Activated B cell treated with CpG ODN at 0.5 μM for 24 hours (primary cell): ENCODE measurements at regions of chr10 and their contacts with region 1.

Region 1: GRCh38 chr10:119305860-119306513 is 98.6 kb downstream of the GRK5 start:
- DNase-seq: peak; percentile 77
- ATAC-seq: peak; percentile 72
- H3K4me3 Mint-ChIP-seq: peak overlapping the region; percentile 86
- H3K27ac Mint-ChIP-seq: peak overlapping the region; percentile 100
- H3K4me1 Mint-ChIP-seq: peaks cover 98% of the 10 kb centered on the region
- H3K27me3 Mint-ChIP-seq: no peaks in the 10 kb centered on the region
- CTCF ChIP-seq: no peak

Region 2: GRCh38 chr10:117710181-117710798 is 1595.7 kb before region 1 on chr10:
- CTCF ChIA-PET with region 1: no interaction called
- POLR2A ChIA-PET with region 1: no interaction called
- intact Hi-C with region 1: no loop called
- DNase-seq: no peak
- ATAC-seq: no peak
- H3K4me3 Mint-ChIP-seq: no peak overlapping the region
- H3K27ac Mint-ChIP-seq: no peak overlapping the region
- H3K4me1 Mint-ChIP-seq: no peaks in the 10 kb centered on the region
- H3K27me3 Mint-ChIP-seq: no peaks in the 10 kb centered on the region
- CTCF ChIP-seq: no peak

Region 3: GRCh38 chr10:118809357-118810220 is 496.4 kb before region 1 on chr10:
- CTCF ChIA-PET with region 1: no interaction called
- POLR2A ChIA-PET with region 1: no interaction called
- intact Hi-C with region 1: no loop called
- DNase-seq: no peak
- ATAC-seq: no peak
- H3K4me3 Mint-ChIP-seq: no peak overlapping the region
- H3K27ac Mint-ChIP-seq: no peak overlapping the region
- H3K4me1 Mint-ChIP-seq: no peaks in the 10 kb centered on the region
- H3K27me3 Mint-ChIP-seq: peaks cover 7% of the 10 kb centered on the region
- CTCF ChIP-seq: no peak

Region 4: DNA sequence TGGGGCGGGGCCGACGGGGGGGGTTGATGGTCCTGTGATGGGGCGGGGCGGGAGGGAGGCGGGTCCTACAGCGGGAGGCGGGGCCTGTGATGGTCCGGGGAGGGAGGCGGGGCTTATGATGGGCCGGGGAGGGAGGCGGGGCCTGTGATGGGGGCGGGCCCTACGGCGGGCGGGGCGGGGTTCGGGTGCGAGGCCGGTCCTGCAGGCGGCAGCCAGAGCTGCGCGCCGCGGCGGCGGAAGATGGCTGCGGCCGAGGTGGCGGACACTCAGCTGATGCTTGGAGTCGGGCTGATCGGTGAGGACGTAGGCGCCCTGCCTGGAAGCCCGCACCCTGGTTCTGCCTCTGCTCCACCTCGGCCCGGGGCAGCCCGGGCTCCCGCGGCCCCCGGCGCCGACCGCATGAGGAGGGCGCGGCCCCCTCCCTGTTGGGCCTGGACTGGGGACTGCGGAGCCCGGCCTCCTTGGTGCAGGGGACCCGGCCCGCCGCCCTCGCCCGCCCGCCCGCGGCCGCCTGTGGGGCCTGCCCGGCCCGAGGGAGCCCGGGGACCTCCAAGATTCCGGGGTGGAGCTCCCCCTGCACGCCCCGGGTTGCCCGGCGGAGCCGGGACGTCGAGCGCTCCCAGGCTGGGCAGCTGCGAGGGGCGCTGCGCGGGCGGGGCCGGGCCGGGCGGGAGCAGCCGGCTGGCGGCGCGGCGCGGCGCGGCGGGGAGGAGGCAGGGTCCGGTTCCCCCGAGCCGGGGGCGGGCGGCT is 201.9 kb before region 1 on chr10 and contains the start of gene DENND10:
- CTCF ChIA-PET with region 1: no interaction called
- POLR2A ChIA-PET with region 1: no interaction called
- intact Hi-C with region 1: loop called (anchors 1 kb)
- DNase-seq: peak; percentile 69
- ATAC-seq: peak; percentile 91
- H3K4me3 Mint-ChIP-seq: peak within 1 kb of the TSS; percentile 75
- H3K27ac Mint-ChIP-seq: peak within 1 kb of the TSS; percentile 68
- H3K4me1 Mint-ChIP-seq: peaks cover 16% of the 10 kb centered on the region
- H3K27me3 Mint-ChIP-seq: no peaks in the 10 kb centered on the region
- CTCF ChIP-seq: no peak
- total RNA-seq, gene DENND10: 14.4 and 15.0 TPM in 2 replicates

Region 5: GRCh38 chr10:119221201-119221600 is 84.8 kb before region 1 on chr10:
- CTCF ChIA-PET with region 1: no interaction called
- POLR2A ChIA-PET with region 1: interaction called, 5 read pairs
- intact Hi-C with region 1: loop called (anchors 1 kb)
- DNase-seq: no peak
- ATAC-seq: no peak
- H3K4me3 Mint-ChIP-seq: no peak overlapping the region
- H3K27ac Mint-ChIP-seq: no peak overlapping the region
- H3K4me1 Mint-ChIP-seq: peaks cover 27% of the 10 kb centered on the region
- H3K27me3 Mint-ChIP-seq: no peaks in the 10 kb centered on the region
- CTCF ChIP-seq: no peak

Region 6: GRCh38 chr10:119368991-119369869 is 63.2 kb after region 1 on chr10:
- CTCF ChIA-PET with region 1: interaction called, 3 read pairs
- POLR2A ChIA-PET with region 1: interaction called, 35 read pairs
- intact Hi-C with region 1: loop called (anchors 1 kb)
- DNase-seq: peak; percentile 46
- ATAC-seq: peak; percentile 72
- H3K4me3 Mint-ChIP-seq: peak overlapping the region; percentile 87
- H3K27ac Mint-ChIP-seq: peak overlapping the region; percentile 98
- H3K4me1 Mint-ChIP-seq: peaks cover 66% of the 10 kb centered on the region
- H3K27me3 Mint-ChIP-seq: no peaks in the 10 kb centered on the region
- CTCF ChIP-seq: no peak

Region 7: DNA sequence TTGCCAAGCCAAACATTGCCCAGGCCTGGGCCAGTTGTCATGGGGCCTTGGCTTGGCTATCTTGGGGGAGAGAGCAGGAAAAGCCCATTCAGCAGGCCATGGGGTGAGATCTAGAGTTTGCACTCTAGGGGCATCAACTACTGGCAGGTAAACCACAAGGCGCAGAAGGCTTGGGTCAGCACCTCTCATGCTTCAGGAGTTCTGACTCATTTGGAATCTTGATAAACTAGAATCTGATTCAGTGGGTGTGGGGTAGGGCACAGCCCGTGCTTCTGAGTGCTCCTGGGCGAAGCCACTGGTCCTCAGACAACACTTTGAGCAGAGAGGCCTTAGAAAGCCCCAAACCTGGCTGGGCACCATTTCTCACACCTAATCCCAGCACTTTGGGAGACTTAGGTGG is 155.4 kb after region 1 on chr10:
- CTCF ChIA-PET with region 1: no interaction called
- POLR2A ChIA-PET with region 1: no interaction called
- intact Hi-C with region 1: loop called (anchors 5 kb)
- DNase-seq: no peak
- ATAC-seq: peak; percentile 92
- H3K4me3 Mint-ChIP-seq: peak overlapping the region; percentile 33
- H3K27ac Mint-ChIP-seq: peak overlapping the region; percentile 78
- H3K4me1 Mint-ChIP-seq: peaks cover 39% of the 10 kb centered on the region
- H3K27me3 Mint-ChIP-seq: peaks cover 7% of the 10 kb centered on the region
- CTCF ChIP-seq: no peak

Region 8: GRCh38 chr10:119542988-119543813 is 237.2 kb after region 1 on chr10:
- CTCF ChIA-PET with region 1: no interaction called
- POLR2A ChIA-PET with region 1: interaction called, 4 read pairs
- intact Hi-C with region 1: loop called (anchors 1 kb)
- DNase-seq: peak; percentile 61
- ATAC-seq: peak; percentile 53
- H3K4me3 Mint-ChIP-seq: peak overlapping the region; percentile 91
- H3K27ac Mint-ChIP-seq: peak overlapping the region; percentile 87
- H3K4me1 Mint-ChIP-seq: peaks cover 38% of the 10 kb centered on the region
- H3K27me3 Mint-ChIP-seq: peaks cover 9% of the 10 kb centered on the region
- CTCF ChIP-seq: no peak

Region 9: GRCh38 chr10:119725828-119726675 is 420.1 kb after region 1 on chr10 and contains the start of gene INPP5F:
- CTCF ChIA-PET with region 1: no interaction called
- POLR2A ChIA-PET with region 1: no interaction called
- intact Hi-C with region 1: loop called (anchors 5 kb)
- DNase-seq: peak; percentile 96
- ATAC-seq: peak; percentile 92
- H3K4me3 Mint-ChIP-seq: peak within 1 kb of the TSS; percentile 92
- H3K27ac Mint-ChIP-seq: peak within 1 kb of the TSS; percentile 81
- H3K4me1 Mint-ChIP-seq: peaks cover 57% of the 10 kb centered on the region
- H3K27me3 Mint-ChIP-seq: no peaks in the 10 kb centered on the region
- CTCF ChIP-seq: no peak
- total RNA-seq, gene INPP5F: 45.9 and 53.5 TPM in 2 replicates